ENCODE measurements at regions of chr2 and their contacts with region 1.

Region 1: GRCh38 chr2:218343591-218343990 is 13.1 kb upstream of the CATIP start:
- DNase-seq: no peak
- H3K4me3 ChIP-seq: no peak overlapping the region
- H3K27ac ChIP-seq: no peak overlapping the region
- H3K4me1 ChIP-seq: peaks cover 0 to 4% (median 0%) of the 10 kb centered on the region in 4 experiments; a peak in 1 of 7 replicates
- H3K27me3 ChIP-seq: no peaks in the 10 kb centered on the region
- CTCF ChIP-seq: no peak
- EP300 ChIP-seq: no peak
- POLR2A ChIP-seq: no peak
- RAD21 ChIP-seq: no peak

Region 2: DNA sequence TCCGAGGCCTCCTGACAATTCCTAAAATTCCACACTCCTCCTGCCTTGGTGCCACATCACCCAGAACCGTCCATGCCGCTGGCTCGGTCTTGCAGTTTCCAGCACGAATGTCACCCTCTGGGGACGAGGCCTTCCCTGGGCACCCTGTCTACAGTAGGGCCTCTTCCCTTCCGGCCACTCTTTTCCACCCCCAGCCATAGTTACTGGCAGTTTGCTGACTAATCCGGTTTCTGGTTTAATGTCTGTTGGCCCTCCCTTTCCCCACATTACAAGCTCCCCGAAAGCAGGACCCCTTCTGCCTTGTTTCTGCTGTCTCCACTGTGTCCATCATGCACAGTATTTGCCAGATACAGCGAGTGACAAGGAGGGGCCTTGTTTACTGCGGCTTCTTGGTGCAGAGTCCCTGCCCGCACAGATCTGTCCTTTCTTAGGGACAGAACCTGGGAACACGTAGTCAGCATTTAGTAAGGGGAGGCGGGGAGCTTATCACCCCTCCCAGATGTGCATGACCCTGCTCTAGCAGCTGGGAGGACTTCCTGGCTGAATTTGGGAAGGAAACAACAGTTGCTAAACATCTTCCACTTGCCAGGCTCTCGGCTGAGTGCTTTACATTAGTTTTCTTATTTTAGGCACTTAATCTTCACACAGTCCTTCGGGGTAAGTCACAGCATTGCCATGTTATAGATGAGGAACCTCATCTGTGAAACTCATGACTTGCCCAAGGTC is 10.5 kb before region 1 on chr2:
- CTCF ChIA-PET with region 1: interaction called, 10 read pairs
- POLR2A ChIA-PET with region 1: no interaction called
- DNase-seq: no peak
- H3K4me3 ChIP-seq: no peak overlapping the region
- H3K27ac ChIP-seq: no peak overlapping the region
- H3K4me1 ChIP-seq: peaks cover 0 to 7% (median 3%) of the 10 kb centered on the region in 4 experiments; a peak in 5 of 7 replicates
- H3K27me3 ChIP-seq: no peaks in the 10 kb centered on the region
- CTCF ChIP-seq: no peak
- EP300 ChIP-seq: no peak
- POLR2A ChIP-seq: no peak
- RAD21 ChIP-seq: no peak

Measured in H1 (cell line).